Panc1 (cell line): ENCODE measurements at regions of chr4 and their contacts with region 1.

Region 1: GRCh38 chr4:140515423-140515822 is 8.5 kb upstream of the ELMOD2 start:
- DNase-seq: no peak
- ATAC-seq: no peak
- H3K4me3 ChIP-seq: no peak overlapping the region
- H3K27ac ChIP-seq: no peak overlapping the region
- H3K4me1 ChIP-seq: no peaks in the 10 kb centered on the region
- H3K27me3 ChIP-seq: no peaks in the 10 kb centered on the region; the same call in 1 of the 2 replicates
- CTCF ChIP-seq: no peak

Region 2: DNA sequence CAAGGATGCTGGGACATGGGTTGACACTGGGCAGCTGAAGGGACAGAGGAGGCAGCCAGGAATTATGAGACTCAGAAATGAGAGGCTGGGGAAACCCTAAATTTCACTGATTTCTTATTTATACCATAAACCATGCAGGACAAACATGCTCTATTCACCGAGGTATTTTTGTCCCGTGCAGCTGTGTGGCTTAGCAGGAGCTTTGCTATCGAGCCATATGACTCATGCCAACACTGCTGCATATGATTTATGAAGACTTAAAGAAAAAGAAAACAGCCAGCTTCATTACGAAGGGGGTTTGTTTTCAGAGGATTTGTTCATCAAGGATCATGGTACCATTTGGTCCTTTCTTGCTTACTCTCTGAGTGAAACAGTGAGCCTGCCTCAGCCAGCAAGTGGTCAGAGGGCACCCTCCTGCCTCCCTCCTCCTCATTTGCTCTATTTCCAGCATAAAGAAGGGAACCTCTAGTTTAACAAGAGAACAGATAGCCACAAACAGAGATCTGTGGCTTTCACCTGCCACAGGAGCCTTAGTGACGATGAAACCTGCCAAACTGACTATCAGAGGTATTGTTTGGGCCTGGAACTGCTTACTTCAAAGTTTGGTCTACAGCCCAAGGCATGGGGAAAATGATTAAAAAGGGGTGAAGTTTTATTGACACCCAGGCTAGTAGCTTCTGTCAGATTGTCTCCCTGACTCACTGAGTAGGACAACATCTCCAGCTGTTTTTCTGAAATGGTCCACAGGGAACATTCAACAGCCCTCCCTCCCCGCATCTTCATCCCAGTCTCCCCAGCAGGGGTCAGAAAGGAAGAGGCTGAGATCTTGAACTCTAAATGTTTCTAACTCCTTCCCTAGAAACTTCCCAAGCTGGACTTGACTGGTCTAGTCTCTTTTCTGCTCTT is 281.4 kb before region 1 on chr4:
- CTCF ChIA-PET with region 1: no interaction called
- POLR2A ChIA-PET with region 1: interaction called, 11 read pairs
- in situ Hi-C with region 1: no loop called
- intact Hi-C with region 1: no loop called
- DNase-seq: no peak
- ATAC-seq: no peak
- H3K4me3 ChIP-seq: no peak overlapping the region
- H3K27ac ChIP-seq: no peak overlapping the region
- H3K4me1 ChIP-seq: no peaks in the 10 kb centered on the region; the same call in 1 of the 2 replicates
- H3K27me3 ChIP-seq: no peaks in the 10 kb centered on the region
- CTCF ChIP-seq: no peak

Region 3: GRCh38 chr4:140330311-140330900 is 185.0 kb before region 1 on chr4:
- CTCF ChIA-PET with region 1: no interaction called
- POLR2A ChIA-PET with region 1: no interaction called
- in situ Hi-C with region 1: no loop called
- intact Hi-C with region 1: no loop called
- DNase-seq: no peak
- ATAC-seq: no peak
- H3K4me3 ChIP-seq: no peak overlapping the region
- H3K27ac ChIP-seq: no peak overlapping the region
- H3K4me1 ChIP-seq: no peaks in the 10 kb centered on the region
- H3K27me3 ChIP-seq: no peaks in the 10 kb centered on the region
- CTCF ChIP-seq: peak; percentile 59; the same call in 1 of the 2 replicates

Region 4: GRCh38 chr4:140617499-140618248 is 102.3 kb after region 1 on chr4:
- CTCF ChIA-PET with region 1: no interaction called
- POLR2A ChIA-PET with region 1: no interaction called
- in situ Hi-C with region 1: no loop called
- intact Hi-C with region 1: no loop called
- DNase-seq: no peak
- ATAC-seq: no peak
- H3K4me3 ChIP-seq: no peak overlapping the region
- H3K27ac ChIP-seq: no peak overlapping the region
- H3K4me1 ChIP-seq: no peaks in the 10 kb centered on the region
- H3K27me3 ChIP-seq: no peaks in the 10 kb centered on the region
- CTCF ChIP-seq: no peak